Dorsolateral prefrontal cortex (tissue), 120 donors: ENCODE measurements at regions of chrX and their contacts with region 1.

Region 1: DNA sequence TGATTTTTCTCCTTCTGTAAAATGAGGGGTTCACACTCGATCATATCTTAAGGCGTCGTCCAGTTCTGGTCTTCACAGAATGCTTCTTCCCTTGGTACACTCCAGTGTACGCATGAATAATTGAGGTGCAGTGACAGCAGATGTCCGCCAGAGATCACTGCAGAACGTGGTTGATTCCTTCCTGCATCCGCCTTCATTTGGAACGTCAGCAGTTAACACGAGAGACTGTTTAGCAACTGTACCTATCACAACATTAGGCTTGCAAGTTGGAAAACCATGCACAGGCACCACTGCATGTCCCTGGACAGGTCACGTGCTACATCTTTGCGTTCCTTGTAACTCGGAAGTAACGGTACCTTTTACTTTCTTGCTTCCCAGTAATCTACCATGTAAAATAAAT is 66.0 kb upstream of the GEMIN8 start:
- DNase-seq: peak in 7 of 10 donors; percentile 5 to 50 (median 41)
- H3K4me3 ChIP-seq: peak overlapping the region in 8 of 59 donors; percentile 11 to 42 (median 27)
- H3K27ac ChIP-seq: no peak overlapping the region
- H3K27me3 ChIP-seq: peaks cover 0 to 66% (median 25%) of the 10 kb centered on the region in 45 donors
- CTCF ChIP-seq: peak in 55 of 56 donors; percentile 36 to 77 (median 62)

Region 2: GRCh38 chrX:14528629-14529289 is 433.1 kb after region 1 on chrX:
- intact Hi-C with region 1: loop called in 1 of 2 experiments (anchors 5 kb)
- DNase-seq: peak; percentile 43 to 78 (median 56)
- H3K4me3 ChIP-seq: peak overlapping the region in 45 of 59 donors; percentile 3 to 55 (median 34)
- H3K27ac ChIP-seq: no peak overlapping the region
- H3K27me3 ChIP-seq: peaks cover 0 to 56% (median 9%) of the 10 kb centered on the region in 45 donors
- CTCF ChIP-seq: peak in 54 of 56 donors; percentile 25 to 69 (median 53)

Region 3: GRCh38 chrX:15143050-15143824 is 1047.5 kb after region 1 on chrX:
- intact Hi-C with region 1: loop called in 1 of 2 experiments (anchors 5 kb)
- DNase-seq: peak in 8 of 10 donors; percentile 21 to 55 (median 40)
- H3K4me3 ChIP-seq: no peak overlapping the region
- H3K27ac ChIP-seq: no peak overlapping the region
- H3K27me3 ChIP-seq: peaks cover 0 to 72% (median 20%) of the 10 kb centered on the region in 45 donors
- CTCF ChIP-seq: peak; percentile 49 to 82 (median 68)